Heart right ventricle (tissue), 16 donors: ENCODE measurements at regions of chr16 and their contacts with region 1.

Region 1: DNA sequence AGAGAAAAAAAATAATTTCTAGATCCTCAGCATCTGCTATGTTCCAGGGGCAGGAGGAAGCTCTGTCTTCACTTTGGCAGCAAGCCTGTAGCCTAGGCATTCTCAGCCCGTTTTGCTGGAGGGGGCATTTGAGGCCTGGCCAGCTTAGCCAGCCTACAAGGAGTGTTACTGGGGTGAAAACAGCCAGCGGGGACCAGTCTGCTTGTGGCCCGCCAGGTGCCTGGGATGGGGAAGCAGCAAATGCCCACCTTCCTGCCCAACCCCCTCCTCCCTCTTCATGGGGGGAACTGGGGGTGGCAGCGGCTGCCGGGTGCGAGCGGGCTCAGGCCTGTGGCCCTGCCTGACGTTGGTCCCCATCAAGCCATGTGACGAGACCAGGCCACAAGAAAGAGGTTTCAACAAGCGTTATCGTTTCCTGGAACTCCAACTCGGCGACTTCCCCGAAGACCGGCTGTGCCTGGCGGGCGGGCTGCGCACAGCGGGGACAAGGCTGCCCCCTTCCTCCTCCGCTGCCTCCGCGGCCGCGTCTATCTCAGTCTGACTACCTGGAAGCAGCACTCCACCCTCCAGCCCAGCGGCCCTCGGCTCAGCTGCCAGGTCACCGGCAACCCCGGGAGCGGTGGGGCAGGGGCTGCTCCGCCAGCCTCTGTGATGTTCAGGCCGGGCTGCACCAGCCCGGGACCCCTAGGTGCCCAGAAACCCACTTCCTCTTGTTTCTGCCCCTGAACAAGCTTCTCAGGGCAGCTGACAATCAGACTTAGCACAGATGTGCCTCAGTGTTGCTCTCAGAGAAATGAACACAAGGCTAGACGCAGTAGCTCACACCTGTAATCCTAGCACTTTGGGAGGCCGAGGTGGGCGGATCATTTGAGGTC is 22.9 kb downstream of the SOCS1 start:
- DNase-seq: peak; percentile 24 to 48
- ATAC-seq: peak; percentile 50 to 82 (median 64)
- H3K4me3 ChIP-seq: peak overlapping the region in 2 of 10 donors; percentile 1 to 32
- H3K27ac ChIP-seq: peak overlapping the region in 1 of 10 donors; percentile 89
- H3K4me1 ChIP-seq: peaks cover 0 to 56% (median 9%) of the 10 kb centered on the region in 9 donors
- H3K27me3 ChIP-seq: peaks cover 0 to 9% (median 0%) of the 10 kb centered on the region in 7 donors
- CTCF ChIP-seq: no peak

Region 2: DNA sequence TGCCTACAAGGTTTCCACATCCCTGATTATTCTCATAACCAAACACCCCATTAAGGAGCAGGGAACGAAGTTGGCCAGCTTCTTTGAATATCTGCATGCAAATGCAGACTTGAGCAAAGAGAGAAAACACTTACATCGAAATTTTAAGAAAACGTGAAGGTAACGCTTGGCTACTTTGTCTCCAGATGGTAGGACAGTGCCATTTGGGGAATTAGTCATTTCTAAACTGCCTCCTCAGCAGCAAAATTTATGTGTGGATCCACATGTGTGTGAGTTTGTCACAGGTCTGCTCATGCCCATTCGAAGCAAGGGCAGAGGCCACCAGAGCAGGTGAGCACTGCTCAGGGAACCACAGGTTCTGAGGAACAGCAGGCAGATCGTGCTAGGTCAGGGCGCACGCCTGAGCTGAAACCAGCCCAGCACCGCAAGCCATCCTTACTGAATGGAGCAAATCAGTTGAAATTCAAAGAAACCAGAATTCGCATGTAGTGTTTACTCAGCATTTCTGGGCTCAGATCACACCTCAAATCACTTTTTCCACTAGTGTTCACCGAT is 57.2 kb before region 1 on chr16:
- intact Hi-C with region 1: loop called in 2 of 10 experiments (anchors 5 to 10 kb)
- DNase-seq: no peak
- ATAC-seq: no peak
- H3K4me3 ChIP-seq: no peak overlapping the region
- H3K27ac ChIP-seq: no peak overlapping the region
- H3K4me1 ChIP-seq: peaks cover 0 to 23% (median 0%) of the 10 kb centered on the region in 9 donors
- H3K27me3 ChIP-seq: no peaks in the 10 kb centered on the region
- CTCF ChIP-seq: no peak

Region 3: DNA sequence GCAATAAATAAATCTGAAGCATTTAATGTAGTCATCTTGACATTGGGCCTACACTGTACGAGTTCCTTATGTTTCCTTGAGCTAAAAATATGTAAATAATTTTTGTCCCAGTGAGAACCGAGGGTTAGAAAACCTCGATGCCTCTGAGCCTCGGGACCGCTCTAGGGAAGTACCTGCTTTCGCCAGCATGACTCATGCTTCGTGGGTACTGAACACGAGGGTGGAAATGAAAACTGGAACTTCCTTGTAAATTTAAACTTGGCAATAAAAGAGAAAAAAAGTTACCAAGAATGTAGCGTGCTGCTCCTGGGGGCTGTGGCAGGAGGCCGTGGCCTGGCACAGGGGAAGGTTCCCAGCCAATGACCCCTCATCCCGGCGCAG is 51.2 kb before region 1 on chr16:
- intact Hi-C with region 1: loop called in 2 of 10 experiments (anchors 5 to 10 kb)
- DNase-seq: no peak
- ATAC-seq: peak in 1 of 8 donors; percentile 20
- H3K4me3 ChIP-seq: no peak overlapping the region
- H3K27ac ChIP-seq: peak overlapping the region in 1 of 10 donors; percentile 65
- H3K4me1 ChIP-seq: peaks cover 0 to 44% (median 0%) of the 10 kb centered on the region in 9 donors
- H3K27me3 ChIP-seq: no peaks in the 10 kb centered on the region
- CTCF ChIP-seq: no peak

Region 4: DNA sequence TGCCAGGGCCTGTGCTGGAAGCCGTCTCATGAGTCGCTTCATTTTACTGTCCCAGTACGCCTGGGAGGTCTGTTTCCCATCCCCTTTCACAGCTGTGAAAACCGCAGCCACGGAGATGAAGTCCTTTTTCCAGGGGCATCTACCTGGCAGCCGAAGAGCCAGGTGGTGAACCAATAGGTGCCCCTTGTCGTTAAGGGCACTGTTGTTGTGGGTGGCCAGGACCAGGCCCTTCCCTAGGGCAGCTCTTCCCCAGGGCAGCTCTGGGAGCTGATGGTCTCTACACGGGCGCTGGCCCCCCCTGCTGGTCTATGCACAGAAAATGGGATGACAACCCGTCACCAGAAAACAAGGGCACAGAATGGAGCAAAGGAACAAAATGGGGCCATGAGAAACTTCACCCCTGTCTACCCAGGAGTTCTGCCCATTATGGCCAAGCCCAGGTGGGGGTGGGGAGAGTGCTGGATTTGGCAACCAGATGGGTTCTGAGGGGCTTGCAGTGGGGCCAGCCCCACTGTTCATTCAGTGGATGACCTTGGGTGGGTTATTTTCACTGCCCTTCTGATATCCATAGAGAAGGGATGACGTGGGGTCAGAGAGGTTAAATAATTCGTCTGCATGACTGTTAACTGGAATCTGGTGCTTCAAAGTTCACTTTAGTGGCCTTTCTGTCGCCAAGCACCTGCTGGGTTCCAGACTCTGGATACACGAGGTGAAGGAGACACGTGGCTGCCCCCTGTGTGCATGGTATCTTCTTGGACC is 123.7 kb after region 1 on chr16:
- intact Hi-C with region 1: no loop called
- DNase-seq: peak; percentile 62 to 72
- ATAC-seq: peak; percentile 34 to 77 (median 61)
- H3K4me3 ChIP-seq: no peak overlapping the region
- H3K27ac ChIP-seq: peak overlapping the region in 7 of 10 donors; percentile 2 to 87 (median 80)
- H3K4me1 ChIP-seq: peaks cover 5 to 68% (median 33%) of the 10 kb centered on the region in 9 donors
- H3K27me3 ChIP-seq: peaks cover 0 to 47% (median 0%) of the 10 kb centered on the region in 7 donors
- CTCF ChIP-seq: peak; percentile 38 to 73 (median 69)